ENCODE measurements at regions of chr1 and their contacts with region 1.

Region 1: DNA sequence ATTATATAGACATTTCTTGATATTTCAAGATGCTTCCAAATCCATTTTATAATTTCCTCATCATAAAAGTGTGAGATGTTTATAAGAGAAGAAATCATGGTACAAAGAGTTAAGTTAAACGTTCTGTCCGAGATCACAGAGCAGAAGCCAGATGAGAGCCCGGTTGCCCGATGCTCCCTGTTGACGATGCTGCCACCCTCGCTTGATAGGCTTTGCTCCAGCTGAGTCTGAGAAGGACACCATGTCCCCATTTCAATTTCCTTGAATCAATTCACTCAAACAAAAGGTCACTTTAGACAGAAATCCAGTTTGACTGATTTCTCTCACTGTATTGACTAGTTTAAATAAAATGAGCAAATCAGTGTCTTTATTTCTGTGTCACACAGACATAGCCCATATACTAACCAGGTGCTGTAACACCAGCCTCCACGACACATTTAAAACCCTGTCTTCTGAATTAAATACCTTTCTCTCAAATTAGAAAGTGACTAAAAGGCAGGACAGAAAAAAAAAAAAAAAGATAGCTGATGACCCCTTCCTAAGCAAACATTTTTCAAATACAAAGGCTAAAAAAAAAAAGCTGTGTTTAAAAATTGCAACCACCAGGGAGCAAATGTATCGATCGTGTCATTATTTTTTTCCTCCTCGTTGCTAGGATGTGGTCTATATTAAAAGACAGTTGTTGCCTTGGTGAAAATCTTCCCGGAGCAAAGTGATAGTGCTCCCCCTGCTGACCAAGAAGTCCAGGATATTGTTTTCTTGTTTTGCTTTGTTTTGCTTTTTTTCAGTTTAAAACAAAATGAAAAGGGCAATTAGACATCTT is 35.2 kb downstream of the DNASE2B start:
- DNase-seq: peak; percentile 63
- H3K4me3 ChIP-seq: peak overlapping the region; percentile 2 to 3
- H3K27ac ChIP-seq: peak overlapping the region; percentile 15 to 53
- H3K4me1 ChIP-seq: no peaks in the 10 kb centered on the region
- H3K27me3 ChIP-seq: no peaks in the 10 kb centered on the region
- CTCF ChIP-seq: peak; percentile 45 to 89 (median 75)
- POLR2A ChIP-seq: no peak

Region 2: GRCh38 chr1:84143796-84144565 is 289.5 kb before region 1 on chr1 and contains the start of gene PRKACB:
- intact Hi-C with region 1: loop called (anchors 5 kb)
- DNase-seq: no peak
- H3K4me3 ChIP-seq: no peak within 1 kb of the TSS
- H3K27ac ChIP-seq: peak within 1 kb of the TSS; percentile 13 to 49
- H3K4me1 ChIP-seq: no peaks in the 10 kb centered on the region
- H3K27me3 ChIP-seq: no peaks in the 10 kb centered on the region
- CTCF ChIP-seq: no peak
- POLR2A ChIP-seq: no peak
- total RNA-seq, gene PRKACB: 24.7 to 29.3 TPM

Region 3: DNA sequence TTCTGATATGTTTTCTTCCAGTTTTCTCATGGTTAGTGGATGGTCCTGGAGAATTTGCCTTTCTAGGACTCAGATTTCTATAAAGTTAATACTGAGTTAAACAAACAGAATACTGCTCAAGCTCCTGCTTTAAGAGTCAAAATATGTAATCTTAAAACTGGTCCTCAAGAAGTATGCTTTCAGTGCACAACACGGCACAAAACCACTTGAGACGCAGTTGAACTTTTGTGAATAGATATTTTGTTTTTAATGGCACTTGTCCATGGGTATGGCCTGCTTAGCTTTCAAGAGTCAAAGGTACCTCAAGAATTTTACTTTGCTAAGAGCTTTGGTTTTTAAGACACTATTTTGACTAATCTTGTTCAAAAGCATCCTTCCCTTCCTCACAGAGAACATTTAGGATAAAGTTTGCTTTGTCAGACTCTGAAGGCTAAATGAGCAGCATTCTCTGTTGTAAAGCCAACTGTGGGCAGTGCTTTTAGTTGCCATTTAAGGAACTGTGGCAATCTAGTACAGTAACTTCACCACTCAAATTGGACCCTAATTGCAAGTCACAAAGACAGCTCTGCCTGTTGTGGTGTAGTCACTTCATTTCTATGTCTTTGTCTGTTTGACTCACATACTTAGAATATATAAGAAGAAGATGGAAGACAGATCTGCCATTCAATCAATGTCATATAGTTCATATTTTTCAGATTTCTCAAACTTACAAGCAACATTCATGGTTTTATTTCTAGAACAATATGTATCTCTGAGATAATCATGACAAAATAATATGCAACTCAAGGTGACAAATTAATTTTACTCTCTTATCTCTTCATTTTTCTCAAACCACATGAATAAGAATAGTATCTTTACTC is 103.1 kb before region 1 on chr1:
- intact Hi-C with region 1: no loop called
- DNase-seq: no peak
- H3K4me3 ChIP-seq: no peak overlapping the region
- H3K27ac ChIP-seq: no peak overlapping the region
- H3K4me1 ChIP-seq: no peaks in the 10 kb centered on the region
- H3K27me3 ChIP-seq: no peaks in the 10 kb centered on the region
- CTCF ChIP-seq: no peak
- POLR2A ChIP-seq: no peak

Region 4: GRCh38 chr1:84724128-84724860 is 290.8 kb after region 1 on chr1:
- intact Hi-C with region 1: no loop called
- DNase-seq: no peak
- H3K4me3 ChIP-seq: no peak overlapping the region
- H3K27ac ChIP-seq: no peak overlapping the region
- H3K4me1 ChIP-seq: no peaks in the 10 kb centered on the region
- H3K27me3 ChIP-seq: no peaks in the 10 kb centered on the region
- CTCF ChIP-seq: no peak
- POLR2A ChIP-seq: no peak

Measured in prostate gland (tissue), 2 donors.